ENCODE measurements at regions of chr20 and their contacts with region 1.

Region 1: DNA sequence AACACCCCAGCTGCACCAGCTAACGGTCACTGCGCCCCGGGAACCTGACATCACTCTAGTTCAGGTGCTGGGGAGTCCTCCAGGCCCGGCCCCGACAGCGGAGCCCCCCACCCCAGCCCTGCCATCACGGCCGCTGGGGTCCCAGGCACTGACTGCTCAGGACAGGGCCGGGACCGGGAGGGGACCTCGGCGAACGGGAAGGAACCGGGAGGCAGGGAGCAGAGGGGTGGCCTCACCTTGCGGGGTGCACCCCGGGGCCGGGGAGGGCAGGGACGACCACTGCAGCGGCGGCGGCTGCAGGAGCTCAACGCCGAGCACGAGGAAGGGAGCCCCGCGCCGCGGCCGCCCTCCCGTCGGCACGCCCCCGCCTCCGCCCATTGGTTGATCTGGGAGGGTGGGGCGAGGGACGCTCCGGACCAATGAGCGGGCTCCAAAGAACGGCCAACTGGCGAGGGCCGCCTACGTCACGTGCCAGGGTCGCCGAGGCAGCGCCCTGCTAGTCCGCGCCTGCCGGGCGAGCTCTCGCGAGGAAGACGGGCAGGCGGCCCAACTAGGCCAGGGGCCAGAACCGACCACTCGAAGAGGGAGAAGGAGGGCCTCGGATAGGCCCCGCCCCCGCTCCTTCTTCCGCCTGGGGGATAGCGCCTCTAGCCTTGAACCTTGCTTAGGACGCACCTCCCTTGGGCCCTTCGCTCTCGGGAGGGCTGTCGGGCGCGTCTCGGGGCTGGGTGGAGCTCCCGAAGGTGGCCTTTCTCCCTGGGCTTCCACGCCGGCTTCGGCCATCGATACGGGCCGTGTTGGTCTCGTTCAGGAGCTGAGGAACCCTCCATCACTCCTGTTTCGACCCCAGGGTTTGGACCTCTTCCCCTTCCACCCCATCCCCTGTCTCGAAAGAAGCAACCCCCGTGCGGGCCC is at the start of gene ADISSP:
- DNase-seq: peak; percentile 91 to 98 (median 95)
- ATAC-seq: peak; percentile 82 to 86
- H3K4me3 Mint-ChIP-seq: peak within 1 kb of the TSS; percentile 85 to 93 (median 90)
- H3K27ac Mint-ChIP-seq: peak within 1 kb of the TSS; percentile 93 to 99 (median 98)
- H3K4me1 Mint-ChIP-seq: peaks cover 13 to 45% (median 37%) of the 10 kb centered on the region in 4 donors
- H3K27me3 Mint-ChIP-seq: peaks cover 0 to 3% (median 0%) of the 10 kb centered on the region in 5 donors
- polyA plus RNA-seq, gene ADISSP: 17.6 to 32.4 (median 22.2) TPM

Region 2: GRCh38 chr20:3753098-3753980 is 14.3 kb before region 1 on chr20:
- POLR2A ChIA-PET with region 1: interaction called, 12 read pairs
- DNase-seq: peak; percentile 31 to 77 (median 56)
- ATAC-seq: peak; percentile 67 to 75
- H3K4me3 Mint-ChIP-seq: peak overlapping the region in 5 of 10 donors; percentile 10 to 81 (median 46)
- H3K27ac Mint-ChIP-seq: peak overlapping the region in 1 of 10 donors; percentile 46
- H3K4me1 Mint-ChIP-seq: peaks cover 9 to 15% (median 14%) of the 10 kb centered on the region in 4 donors
- H3K27me3 Mint-ChIP-seq: no peaks in the 10 kb centered on the region

Region 3: DNA sequence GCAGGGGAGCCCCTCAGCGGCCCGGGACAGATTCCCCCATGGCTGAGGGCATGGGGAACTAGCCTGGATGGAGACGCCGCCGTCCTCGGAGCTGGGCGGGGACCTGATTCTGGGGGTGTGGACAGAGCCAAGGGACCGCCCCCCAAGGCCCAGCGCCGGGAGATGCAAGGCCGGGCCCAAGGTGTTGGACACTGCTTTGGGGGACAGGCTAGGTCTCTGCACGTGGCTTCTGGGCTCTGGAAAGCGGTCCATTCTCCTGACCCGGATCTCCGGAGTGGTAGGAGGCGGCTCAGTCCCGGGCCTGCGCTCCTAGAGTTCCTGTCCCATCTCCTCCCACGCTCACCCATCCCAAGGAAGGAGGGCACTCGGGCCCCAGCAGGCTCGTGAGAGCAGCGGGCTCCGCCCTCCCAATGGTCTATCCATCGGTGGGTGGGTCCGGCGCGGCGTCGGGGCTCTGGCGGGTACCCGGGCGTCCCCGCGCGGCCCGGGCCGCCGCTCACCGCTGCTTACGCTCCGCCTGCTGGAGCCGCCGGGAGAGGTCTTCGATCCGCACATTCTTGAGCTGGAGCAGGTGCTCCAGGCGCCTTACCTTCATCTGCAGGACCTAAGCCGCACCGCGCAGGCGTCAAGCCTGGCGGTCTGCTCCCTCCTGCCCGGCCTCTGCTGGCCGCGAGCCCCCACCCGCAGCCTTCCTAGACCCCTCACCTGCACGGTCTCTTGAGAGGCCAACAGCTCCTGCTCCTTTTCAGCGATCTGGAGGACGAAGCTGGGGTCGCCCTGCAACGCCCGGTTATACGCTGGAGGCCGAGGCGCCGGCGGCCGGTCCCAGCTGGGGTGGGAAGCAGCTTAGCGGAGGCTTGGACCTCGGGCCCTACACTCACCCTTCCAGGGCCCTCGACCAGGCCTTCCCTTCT is 10.3 kb after region 1 on chr20:
- POLR2A ChIA-PET with region 1: interaction called, 29 read pairs
- DNase-seq: peak in 3 of 10 donors; percentile 26 to 33 (median 27)
- ATAC-seq: peak; percentile 70 to 72
- H3K4me3 Mint-ChIP-seq: peak overlapping the region; percentile 77 to 90 (median 84)
- H3K27ac Mint-ChIP-seq: peak overlapping the region in 3 of 10 donors; percentile 2 to 82 (median 54)
- H3K4me1 Mint-ChIP-seq: peaks cover 15 to 41% (median 35%) of the 10 kb centered on the region in 4 donors
- H3K27me3 Mint-ChIP-seq: peaks cover 0 to 9% (median 0%) of the 10 kb centered on the region in 5 donors

Region 4: GRCh38 chr20:3786665-3787323 is 19.1 kb after region 1 on chr20 and contains the start of gene CENPB:
- POLR2A ChIA-PET with region 1: interaction called, 52 read pairs
- DNase-seq: peak; percentile 79 to 94 (median 89)
- ATAC-seq: peak; percentile 85 to 88
- H3K4me3 Mint-ChIP-seq: peak within 1 kb of the TSS; percentile 68 to 89 (median 82)
- H3K27ac Mint-ChIP-seq: peak within 1 kb of the TSS in 8 of 10 donors; percentile 73 to 90 (median 85)
- H3K4me1 Mint-ChIP-seq: peaks cover 17 to 45% (median 38%) of the 10 kb centered on the region in 4 donors
- H3K27me3 Mint-ChIP-seq: no peaks in the 10 kb centered on the region
- polyA plus RNA-seq, gene CENPB: 1.0 to 1.7 (median 1.4) TPM

Region 5: GRCh38 chr20:3797592-3798372 is 30.1 kb after region 1 on chr20:
- POLR2A ChIA-PET with region 1: interaction called, 13 read pairs
- DNase-seq: peak in 5 of 10 donors; percentile 31 to 74 (median 51)
- ATAC-seq: peak in 1 of 2 donors; percentile 31
- H3K4me3 Mint-ChIP-seq: peak overlapping the region; percentile 95 to 100 (median 98)
- H3K27ac Mint-ChIP-seq: peak overlapping the region; percentile 94 to 99 (median 97)
- H3K4me1 Mint-ChIP-seq: peaks cover 25 to 62% (median 61%) of the 10 kb centered on the region in 4 donors
- H3K27me3 Mint-ChIP-seq: no peaks in the 10 kb centered on the region

Region 6: DNA sequence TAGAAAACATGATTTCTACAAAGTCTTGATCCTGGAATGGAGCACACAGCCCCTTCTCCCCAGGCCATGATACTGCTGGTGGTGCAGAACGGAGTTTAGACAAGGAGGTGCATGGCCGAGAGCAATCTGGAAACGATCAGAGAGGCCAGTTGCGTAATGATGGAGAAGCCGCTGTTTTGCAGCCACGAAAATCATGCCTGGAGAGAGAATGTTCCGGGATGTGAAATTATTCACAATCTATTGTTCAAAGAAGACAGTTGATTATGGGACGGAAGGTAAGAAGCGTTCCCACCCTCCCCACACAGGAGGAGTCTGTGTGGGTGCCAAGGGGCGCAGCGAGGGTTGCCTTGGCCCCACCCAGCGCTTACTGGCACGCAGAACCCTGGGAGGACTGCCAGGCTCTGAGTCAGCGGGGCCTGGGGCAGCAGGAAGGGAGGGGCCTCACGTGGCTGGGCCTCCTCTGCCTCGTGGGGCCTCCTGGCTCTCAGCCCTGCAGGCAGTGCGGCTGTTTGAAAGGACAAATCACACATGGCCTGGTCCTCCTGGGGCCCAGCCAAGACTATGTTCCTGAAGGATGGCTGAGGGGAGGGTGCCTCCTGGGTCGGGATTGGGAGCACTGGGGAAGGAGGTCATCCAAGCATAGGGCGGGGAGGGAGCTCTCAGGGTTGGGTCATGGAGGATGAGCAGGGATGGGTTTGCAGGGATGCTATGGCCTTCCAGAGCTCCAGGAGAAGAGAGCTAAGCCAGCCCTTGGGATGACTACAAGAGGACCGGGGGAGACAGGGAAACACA is 44.0 kb after region 1 on chr20:
- POLR2A ChIA-PET with region 1: interaction called, 27 read pairs
- DNase-seq: peak; percentile 84 to 98 (median 91)
- ATAC-seq: peak; percentile 86 to 91
- H3K4me3 Mint-ChIP-seq: peak overlapping the region; percentile 87 to 94 (median 90)
- H3K27ac Mint-ChIP-seq: peak overlapping the region; percentile 96 to 100 (median 98)
- H3K4me1 Mint-ChIP-seq: peaks cover 41 to 85% (median 78%) of the 10 kb centered on the region in 4 donors
- H3K27me3 Mint-ChIP-seq: no peaks in the 10 kb centered on the region

Region 7: GRCh38 chr20:3820048-3820900 is 52.6 kb after region 1 on chr20 and contains the start of gene AP5S1:
- POLR2A ChIA-PET with region 1: interaction called, 38 read pairs
- DNase-seq: peak; percentile 81 to 99 (median 88)
- ATAC-seq: peak; percentile 84
- H3K4me3 Mint-ChIP-seq: peak within 1 kb of the TSS; percentile 82 to 95 (median 90)
- H3K27ac Mint-ChIP-seq: peak within 1 kb of the TSS; percentile 91 to 99 (median 98)
- H3K4me1 Mint-ChIP-seq: peaks cover 20 to 55% (median 55%) of the 10 kb centered on the region in 4 donors
- H3K27me3 Mint-ChIP-seq: no peaks in the 10 kb centered on the region
- polyA plus RNA-seq, gene AP5S1: 10.1 to 21.8 (median 19.3) TPM